ENCODE measurements at regions of chr3 and their contacts with region 1.

Region 1: DNA sequence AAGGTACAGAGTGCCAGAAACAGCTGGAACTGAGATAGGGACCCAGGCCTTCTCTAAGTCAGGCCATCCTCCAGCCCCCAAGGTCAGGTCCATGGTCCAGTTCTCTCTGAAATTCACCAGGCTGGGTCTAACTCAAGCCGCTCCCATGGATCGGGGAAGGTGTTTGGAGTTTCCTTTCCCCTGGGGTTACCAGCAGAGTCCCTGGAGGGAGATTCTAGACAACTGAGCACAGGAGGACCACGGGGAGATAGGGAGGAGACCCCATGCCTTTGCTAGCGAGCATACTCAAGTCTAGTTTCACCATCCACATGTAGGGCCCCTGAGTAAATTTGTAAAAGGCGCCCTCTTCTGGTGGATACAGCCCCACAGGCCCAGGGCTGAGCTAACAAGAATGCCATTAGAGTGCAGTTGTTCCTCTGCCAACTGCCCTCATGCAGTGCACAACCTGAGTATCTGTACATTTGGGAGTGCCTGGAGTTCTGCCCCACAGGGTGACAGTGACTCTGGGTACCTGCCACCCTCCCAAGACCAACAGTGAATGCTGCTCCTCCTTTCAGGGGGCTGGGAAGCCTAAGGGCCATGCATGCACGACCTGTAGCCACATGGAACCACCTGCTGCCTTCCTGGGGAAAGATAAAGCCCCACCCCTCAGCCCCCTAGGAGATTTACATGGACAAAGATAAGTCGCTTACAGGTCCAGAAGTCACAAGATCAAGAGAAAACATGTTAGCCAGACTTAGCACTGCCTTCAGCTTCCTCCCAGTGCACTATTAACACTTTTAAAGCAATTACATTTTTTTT is 89.0 kb downstream of the IQSEC1 start:
- DNase-seq: peak; percentile 83 to 90
- H3K4me3 ChIP-seq: no peak overlapping the region
- H3K27ac ChIP-seq: peak overlapping the region in 2 of 5 donors; percentile 7 to 13
- H3K4me1 ChIP-seq: peaks cover 0 to 22% (median 19%) of the 10 kb centered on the region in 4 donors
- H3K27me3 ChIP-seq: no peaks in the 10 kb centered on the region
- CTCF ChIP-seq: peak in 5 of 7 experiments; percentile 65 to 83 (median 73)
- EP300 ChIP-seq: no peak
- POLR2A ChIP-seq: no peak

Region 2: DNA sequence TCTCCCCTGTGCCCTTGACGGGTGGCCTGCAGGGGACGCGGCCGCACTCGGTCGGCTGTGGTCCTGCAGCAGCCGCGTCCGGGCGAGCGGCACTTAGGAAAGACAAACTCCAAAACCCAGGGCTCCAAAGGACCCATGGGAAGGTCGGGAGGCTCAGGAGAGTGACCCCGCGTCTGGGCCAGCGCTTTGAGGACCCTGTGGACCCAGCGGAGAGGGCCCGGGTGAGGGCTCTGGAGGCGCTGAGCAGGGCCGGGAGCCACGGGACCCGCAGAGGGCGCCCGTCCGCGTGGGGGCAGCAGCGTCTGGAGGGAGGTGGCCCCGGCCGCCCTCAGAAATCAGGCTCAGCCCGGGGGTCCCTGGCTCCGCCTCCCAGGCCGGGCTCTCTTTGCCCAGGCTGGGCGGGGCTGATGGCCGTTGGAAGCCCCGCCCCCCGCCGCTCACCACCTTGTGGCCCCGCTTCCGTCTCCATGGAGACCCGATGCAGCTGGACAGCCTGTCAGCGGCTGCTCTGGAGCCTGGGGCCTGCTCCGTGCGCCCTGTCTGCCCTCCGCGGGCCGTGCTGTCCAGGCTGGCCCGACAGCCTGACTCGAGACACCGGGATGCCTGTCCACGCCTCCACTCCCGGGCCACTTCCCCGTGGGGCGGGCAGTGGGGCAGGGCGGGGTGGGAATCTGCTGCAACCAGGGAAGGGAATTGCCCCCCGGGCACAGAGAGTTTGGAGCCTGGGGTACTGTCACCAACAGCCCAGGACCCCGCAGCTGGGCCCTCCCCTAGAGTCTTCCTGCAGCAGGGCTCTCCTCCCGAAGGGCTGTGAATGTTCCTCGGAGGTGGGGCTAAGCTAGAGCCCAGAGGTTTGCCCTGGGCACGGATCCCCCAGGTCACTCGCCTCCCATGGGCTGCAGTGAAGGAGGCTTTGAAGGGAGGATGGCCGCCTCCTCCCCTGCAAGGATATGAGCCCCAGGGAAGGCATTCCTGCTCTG is 108.1 kb before region 1 on chr3:
- intact Hi-C with region 1: loop called (anchors 10 kb)
- DNase-seq: peak; percentile 62 to 87
- H3K4me3 ChIP-seq: peak overlapping the region; percentile 32 to 47 (median 39)
- H3K27ac ChIP-seq: no peak overlapping the region
- H3K4me1 ChIP-seq: peaks cover 10 to 12% (median 10%) of the 10 kb centered on the region in 4 donors
- H3K27me3 ChIP-seq: peaks cover 0 to 13% (median 7%) of the 10 kb centered on the region in 3 donors
- CTCF ChIP-seq: peak in 2 of 7 experiments; percentile 13 to 18
- EP300 ChIP-seq: no peak
- POLR2A ChIP-seq: no peak

Region 3: GRCh38 chr3:13069495-13069894 is 85.3 kb after region 1 on chr3:
- intact Hi-C with region 1: no loop called
- DNase-seq: peak in 1 of 2 donors; percentile 60
- H3K4me3 ChIP-seq: no peak overlapping the region
- H3K27ac ChIP-seq: no peak overlapping the region
- H3K4me1 ChIP-seq: peaks cover 0 to 21% (median 16%) of the 10 kb centered on the region in 4 donors
- H3K27me3 ChIP-seq: peaks cover 0 to 33% (median 21%) of the 10 kb centered on the region in 3 donors
- CTCF ChIP-seq: no peak
- EP300 ChIP-seq: no peak
- POLR2A ChIP-seq: no peak

Region 4: DNA sequence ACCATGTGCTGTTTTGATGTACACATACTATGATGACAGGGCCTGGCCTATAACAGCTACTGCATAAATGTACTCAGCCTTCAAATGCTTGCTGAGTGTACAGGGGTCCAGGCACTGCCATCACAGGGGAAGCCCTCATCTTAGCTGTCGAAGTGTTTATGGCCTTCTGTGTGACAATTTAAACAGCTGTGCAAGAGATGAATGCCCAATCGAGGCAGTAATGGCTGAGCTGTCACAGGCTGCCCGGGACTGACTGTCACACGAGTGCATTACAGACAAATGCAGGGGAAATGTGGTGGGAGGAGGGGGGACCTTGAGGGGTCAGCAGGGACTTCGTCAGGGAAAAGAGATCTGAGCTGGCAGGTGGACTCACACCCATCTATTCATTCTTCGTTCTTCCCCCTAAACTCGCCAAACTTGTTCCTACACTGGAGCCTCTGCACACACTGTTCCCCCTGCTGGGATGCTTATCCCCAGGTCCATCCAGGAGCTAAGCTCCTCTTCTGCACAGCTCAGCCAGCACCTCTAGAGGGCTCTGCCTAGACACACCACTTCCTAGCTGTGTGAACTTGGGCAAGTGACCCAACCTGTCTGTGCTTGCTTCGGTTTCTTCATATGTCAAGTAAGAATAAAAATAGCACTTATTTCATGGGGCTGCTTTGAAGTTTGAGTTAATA is 245.2 kb after region 1 on chr3:
- intact Hi-C with region 1: no loop called
- DNase-seq: no peak
- H3K4me3 ChIP-seq: no peak overlapping the region
- H3K27ac ChIP-seq: no peak overlapping the region
- H3K4me1 ChIP-seq: no peaks in the 10 kb centered on the region
- H3K27me3 ChIP-seq: peaks cover 0 to 26% (median 0%) of the 10 kb centered on the region in 3 donors
- CTCF ChIP-seq: no peak
- EP300 ChIP-seq: no peak
- POLR2A ChIP-seq: no peak